Activated CD8-positive, alpha-beta T cell treated with anti-CD3 and anti-CD28 coated beads for 36 hours (primary cell): ENCODE measurements at regions of chr17 and their contacts with region 1.

Region 1: GRCh38 chr17:35747540-35748017 is 5.5 kb downstream of the GAS2L2 start:
- DNase-seq: peak; percentile 93
- ATAC-seq: peak; percentile 88
- H3K4me3 Mint-ChIP-seq: peak overlapping the region; percentile 24
- H3K27ac Mint-ChIP-seq: no peak overlapping the region
- H3K4me1 Mint-ChIP-seq: peaks cover 33% of the 10 kb centered on the region
- H3K27me3 Mint-ChIP-seq: peaks cover 43% of the 10 kb centered on the region
- CTCF ChIP-seq: peak; percentile 88

Region 2: GRCh38 chr17:35587074-35587971 is 160.3 kb before region 1 on chr17 and contains the start of gene AP2B1:
- CTCF ChIA-PET with region 1: interaction called, 12 read pairs
- POLR2A ChIA-PET with region 1: interaction called, 3 read pairs
- intact Hi-C with region 1: no loop called
- DNase-seq: peak; percentile 96
- ATAC-seq: peak; percentile 95
- H3K4me3 Mint-ChIP-seq: peak within 1 kb of the TSS; percentile 99
- H3K27ac Mint-ChIP-seq: peak within 1 kb of the TSS; percentile 99
- H3K4me1 Mint-ChIP-seq: peaks cover 22% of the 10 kb centered on the region
- H3K27me3 Mint-ChIP-seq: no peaks in the 10 kb centered on the region
- CTCF ChIP-seq: no peak
- total RNA-seq, gene AP2B1: 157 to 161 TPM

Region 3: GRCh38 chr17:35713069-35713728 is 34.4 kb before region 1 on chr17:
- CTCF ChIA-PET with region 1: interaction called, 26 read pairs
- POLR2A ChIA-PET with region 1: no interaction called
- intact Hi-C with region 1: no loop called
- DNase-seq: no peak
- ATAC-seq: no peak
- H3K4me3 Mint-ChIP-seq: no peak overlapping the region
- H3K27ac Mint-ChIP-seq: no peak overlapping the region
- H3K4me1 Mint-ChIP-seq: peaks cover 14% of the 10 kb centered on the region
- H3K27me3 Mint-ChIP-seq: no peaks in the 10 kb centered on the region
- CTCF ChIP-seq: no peak

Region 4: DNA sequence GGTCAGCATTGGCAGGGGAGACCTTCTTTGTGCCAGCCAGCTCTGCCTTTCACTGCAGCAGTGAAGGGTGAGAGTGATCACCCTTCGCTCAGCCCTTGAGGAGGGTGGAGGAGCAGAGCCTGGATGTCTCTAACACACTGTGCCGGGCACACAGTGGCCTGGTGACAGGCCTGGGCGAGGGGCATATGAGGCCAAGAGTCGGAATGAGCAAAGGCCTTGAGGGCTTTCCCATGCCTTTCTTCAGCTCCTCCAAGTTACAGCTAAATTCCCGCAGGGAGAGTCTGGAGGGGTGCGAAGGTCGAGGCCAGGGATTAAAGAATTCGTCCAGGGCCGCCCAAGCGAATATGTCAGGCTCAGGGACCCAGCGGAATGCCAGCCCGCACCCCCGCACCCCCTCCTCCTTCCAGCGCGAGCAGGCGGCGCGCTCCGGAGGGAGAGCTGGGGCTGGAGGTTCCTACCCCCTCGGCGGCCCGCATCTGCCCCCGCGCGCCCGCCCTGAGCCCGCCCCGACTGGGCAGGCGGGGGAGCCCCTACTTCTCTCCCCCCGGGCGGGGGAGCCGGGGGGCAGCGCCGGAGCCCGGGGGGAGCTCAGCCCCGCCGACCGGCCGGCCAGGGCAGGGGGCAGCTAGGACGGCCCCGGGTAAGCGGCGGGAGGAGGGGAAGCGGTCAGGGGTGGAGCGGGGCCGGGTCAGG is 16.2 kb before region 1 on chr17 and contains the start of gene RASL10B:
- CTCF ChIA-PET with region 1: interaction called, 29 read pairs
- POLR2A ChIA-PET with region 1: interaction called, 6 read pairs
- intact Hi-C with region 1: no loop called
- DNase-seq: peak; percentile 74
- ATAC-seq: peak; percentile 89
- H3K4me3 Mint-ChIP-seq: peak within 1 kb of the TSS; percentile 77
- H3K27ac Mint-ChIP-seq: peak within 1 kb of the TSS; percentile 29
- H3K4me1 Mint-ChIP-seq: peaks cover 14% of the 10 kb centered on the region
- H3K27me3 Mint-ChIP-seq: no peaks in the 10 kb centered on the region
- CTCF ChIP-seq: no peak
- total RNA-seq, gene RASL10B: 1.9 to 2.3 TPM

Region 5: DNA sequence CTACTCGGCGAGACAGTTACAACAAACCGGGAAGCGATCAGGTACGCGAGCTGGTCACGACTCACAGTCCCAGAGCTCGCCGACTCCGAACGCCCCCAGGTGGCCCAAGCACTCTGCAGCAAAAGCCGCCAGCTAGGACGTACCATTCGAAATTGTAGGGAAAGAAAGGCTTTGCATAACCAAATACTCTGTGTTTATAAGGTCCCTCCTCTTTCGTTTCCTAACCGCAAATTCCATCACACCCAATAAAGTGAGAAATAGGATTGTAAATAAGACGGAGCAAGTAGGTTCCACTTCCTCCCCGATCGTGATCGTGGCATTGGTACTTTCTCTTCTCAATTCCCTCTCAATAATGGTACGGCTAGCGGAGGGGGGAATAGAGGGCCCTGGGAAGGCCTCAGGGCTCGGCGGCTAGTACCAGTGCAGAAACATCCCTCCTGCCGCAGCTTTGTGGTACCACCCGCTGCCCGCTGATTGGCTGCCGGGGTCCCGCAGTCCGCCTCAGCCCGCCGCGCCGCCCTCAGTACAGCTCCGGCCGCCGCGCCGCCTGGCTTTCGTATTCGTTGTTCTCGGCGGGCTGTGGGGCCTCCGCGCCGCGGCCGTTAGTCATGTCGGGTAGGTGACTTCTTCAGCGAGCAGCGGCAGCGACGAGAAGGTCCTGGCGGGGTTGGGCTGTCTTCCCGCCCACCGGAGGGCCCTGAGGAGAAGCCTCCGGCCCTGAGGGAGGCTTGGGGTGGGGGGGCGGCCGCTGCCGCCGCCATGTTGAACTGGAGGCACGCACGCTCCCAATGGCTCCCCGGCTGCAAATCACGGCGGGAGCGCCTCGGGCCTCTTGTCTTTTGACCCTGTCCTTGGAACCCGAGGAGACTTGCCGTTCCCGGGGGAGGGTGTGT is 61.6 kb after region 1 on chr17 and contains the start of gene TAF15:
- CTCF ChIA-PET with region 1: interaction called, 16 read pairs
- POLR2A ChIA-PET with region 1: interaction called, 6 read pairs
- intact Hi-C with region 1: no loop called
- DNase-seq: peak; percentile 97
- ATAC-seq: peak; percentile 90
- H3K4me3 Mint-ChIP-seq: peak within 1 kb of the TSS; percentile 89
- H3K27ac Mint-ChIP-seq: peak within 1 kb of the TSS; percentile 100
- H3K4me1 Mint-ChIP-seq: peaks cover 61% of the 10 kb centered on the region
- H3K27me3 Mint-ChIP-seq: no peaks in the 10 kb centered on the region
- CTCF ChIP-seq: peak; percentile 74
- total RNA-seq, gene TAF15: 309 to 319 TPM

Region 6: GRCh38 chr17:35849469-35850348 is 102.1 kb after region 1 on chr17:
- CTCF ChIA-PET with region 1: no interaction called
- POLR2A ChIA-PET with region 1: no interaction called
- intact Hi-C with region 1: no loop called
- DNase-seq: peak; percentile 73
- ATAC-seq: peak; percentile 85
- H3K4me3 Mint-ChIP-seq: no peak overlapping the region
- H3K27ac Mint-ChIP-seq: peak overlapping the region; percentile 40
- H3K4me1 Mint-ChIP-seq: peaks cover 12% of the 10 kb centered on the region
- H3K27me3 Mint-ChIP-seq: no peaks in the 10 kb centered on the region
- CTCF ChIP-seq: peak; percentile 88

Region 7: DNA sequence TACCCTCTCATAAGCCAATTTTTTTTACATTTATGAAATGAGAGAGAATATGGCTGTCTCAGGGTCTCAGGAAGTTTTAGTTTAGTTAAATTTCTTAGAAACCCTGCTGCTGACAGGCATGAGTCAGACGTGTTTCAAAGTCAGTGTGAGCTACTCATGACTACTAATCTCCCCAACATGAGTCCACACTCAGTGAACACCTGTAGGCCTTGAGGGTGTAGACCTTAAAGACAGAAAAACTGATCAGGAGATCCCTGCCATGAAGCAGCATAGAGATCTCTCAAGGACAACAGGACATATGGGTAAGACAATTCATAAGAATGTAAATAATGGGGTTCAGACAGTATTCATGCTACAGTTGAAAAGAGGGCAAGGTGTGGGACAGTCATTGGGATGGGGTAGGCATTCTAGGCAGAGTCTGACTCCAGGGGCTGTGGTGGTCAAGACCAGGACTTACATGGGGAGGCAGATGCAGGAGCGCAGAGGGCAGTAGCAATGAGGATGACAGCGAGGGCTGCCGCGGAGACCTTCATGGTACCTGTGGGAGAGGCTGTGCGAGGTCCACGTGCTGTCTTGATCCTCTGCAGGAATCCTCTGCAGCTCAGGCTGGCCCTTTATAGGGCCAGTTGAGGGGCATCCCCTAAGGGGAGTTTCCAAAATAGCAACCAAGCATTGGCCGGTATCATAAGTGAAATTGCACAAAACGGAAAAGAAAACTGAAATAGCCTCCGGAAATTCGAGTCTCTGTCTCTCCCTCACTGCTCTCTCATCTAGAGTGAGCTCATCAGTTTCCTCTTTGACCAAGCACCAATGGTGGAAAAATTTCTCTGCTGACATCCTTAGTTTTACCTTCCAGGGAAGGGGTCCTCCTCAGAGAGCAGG is 132.4 kb after region 1 on chr17 and contains the start of gene CCL5:
- CTCF ChIA-PET with region 1: no interaction called
- POLR2A ChIA-PET with region 1: no interaction called
- intact Hi-C with region 1: no loop called
- DNase-seq: peak; percentile 77
- ATAC-seq: peak; percentile 87
- H3K4me3 Mint-ChIP-seq: peak within 1 kb of the TSS; percentile 82
- H3K27ac Mint-ChIP-seq: peak within 1 kb of the TSS; percentile 95
- H3K4me1 Mint-ChIP-seq: peaks cover 49% of the 10 kb centered on the region
- H3K27me3 Mint-ChIP-seq: no peaks in the 10 kb centered on the region
- CTCF ChIP-seq: no peak
- total RNA-seq, gene CCL5: 156 to 158 TPM